ENCODE measurements at regions of chr10 and their contacts with region 1.

Region 1: GRCh38 chr10:97869091-97870042 is 19.7 kb downstream of the GOLGA7B start:
- DNase-seq: peak; percentile 79
- H3K4me3 ChIP-seq: no peak overlapping the region
- H3K27ac ChIP-seq: no peak overlapping the region
- H3K4me1 ChIP-seq: peaks cover 6 to 10% (median 8%) of the 10 kb centered on the region in 4 donors
- H3K27me3 ChIP-seq: peaks cover 14% of the 10 kb centered on the region
- CTCF ChIP-seq: peak; percentile 61 to 92 (median 75)
- EP300 ChIP-seq: no peak
- POLR2A ChIP-seq: no peak

Region 2: DNA sequence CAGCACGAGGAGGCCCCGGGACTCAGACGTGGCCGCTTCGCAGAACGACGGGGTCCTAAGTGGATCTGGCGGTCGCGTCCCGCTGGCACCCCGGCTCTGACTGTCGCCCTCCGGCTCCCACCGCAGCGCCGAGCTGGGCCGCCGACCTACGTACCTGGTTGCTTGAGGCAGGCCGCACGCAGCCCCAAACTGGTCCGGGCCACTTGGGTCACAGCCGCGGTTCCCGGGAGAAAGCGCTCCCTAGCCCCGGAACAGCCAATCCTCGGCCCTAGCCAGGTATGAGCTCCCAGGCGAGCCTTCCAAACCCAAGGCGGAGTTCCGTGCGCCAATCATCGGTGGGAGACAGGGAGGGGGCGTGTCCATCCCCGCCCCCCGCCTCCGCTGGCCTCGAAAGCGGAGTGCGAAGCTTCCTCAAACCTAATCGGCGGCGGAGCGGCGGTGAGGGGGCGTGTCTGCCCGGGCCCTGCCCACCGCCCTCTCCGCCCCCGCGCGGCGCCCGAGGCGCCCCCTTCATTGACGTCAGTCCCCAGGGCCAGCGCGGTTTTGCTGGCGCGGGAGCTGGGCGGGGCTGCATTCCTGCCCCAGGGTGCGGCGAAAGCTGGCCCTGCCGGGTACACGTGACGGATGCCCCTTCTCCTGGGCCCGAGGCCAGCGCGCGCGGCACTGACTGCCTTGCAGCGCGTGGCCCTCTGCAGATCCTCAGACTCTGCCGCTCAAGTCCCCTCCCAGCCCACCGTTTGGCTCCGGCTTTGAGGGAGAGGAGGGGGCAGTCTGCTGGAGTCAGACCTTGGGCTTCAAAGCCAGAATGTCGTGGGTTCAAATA is 182.2 kb before region 1 on chr10 and contains the start of gene AVPI1:
- in situ Hi-C with region 1: no loop called
- intact Hi-C with region 1: no loop called
- DNase-seq: peak; percentile 99
- H3K4me3 ChIP-seq: peak within 1 kb of the TSS; percentile 51 to 65 (median 60)
- H3K27ac ChIP-seq: peak within 1 kb of the TSS; percentile 90 to 93 (median 92)
- H3K4me1 ChIP-seq: peaks cover 17 to 61% (median 50%) of the 10 kb centered on the region in 4 donors
- H3K27me3 ChIP-seq: no peaks in the 10 kb centered on the region
- CTCF ChIP-seq: no peak
- EP300 ChIP-seq: peak; percentile 94
- POLR2A ChIP-seq: peak; percentile 99
- total RNA-seq, gene AVPI1: 24.3 to 79.3 (median 47.9) TPM

Region 3: GRCh38 chr10:97792141-97792721 is 77.1 kb before region 1 on chr10:
- in situ Hi-C with region 1: loop called in 1 of 4 experiments (anchors 10 kb)
- intact Hi-C with region 1: no loop called
- DNase-seq: peak; percentile 61
- H3K4me3 ChIP-seq: no peak overlapping the region
- H3K27ac ChIP-seq: no peak overlapping the region
- H3K4me1 ChIP-seq: peaks cover 0 to 7% (median 6%) of the 10 kb centered on the region in 4 donors
- H3K27me3 ChIP-seq: peaks cover 19% of the 10 kb centered on the region
- CTCF ChIP-seq: peak; percentile 77 to 90 (median 80)
- EP300 ChIP-seq: no peak
- POLR2A ChIP-seq: no peak

Measured in transverse colon (tissue), 4 donors.